ENCODE measurements at regions of chr9 and their contacts with region 1.

Region 1: GRCh38 chr9:26975693-26976059 is 19.5 kb downstream of the IFT74 start:
- DNase-seq: peak; percentile 68
- H3K4me3 Mint-ChIP-seq: no peak overlapping the region
- H3K27ac Mint-ChIP-seq: no peak overlapping the region
- H3K4me1 Mint-ChIP-seq: no peaks in the 10 kb centered on the region
- H3K27me3 Mint-ChIP-seq: no peaks in the 10 kb centered on the region

Region 2: DNA sequence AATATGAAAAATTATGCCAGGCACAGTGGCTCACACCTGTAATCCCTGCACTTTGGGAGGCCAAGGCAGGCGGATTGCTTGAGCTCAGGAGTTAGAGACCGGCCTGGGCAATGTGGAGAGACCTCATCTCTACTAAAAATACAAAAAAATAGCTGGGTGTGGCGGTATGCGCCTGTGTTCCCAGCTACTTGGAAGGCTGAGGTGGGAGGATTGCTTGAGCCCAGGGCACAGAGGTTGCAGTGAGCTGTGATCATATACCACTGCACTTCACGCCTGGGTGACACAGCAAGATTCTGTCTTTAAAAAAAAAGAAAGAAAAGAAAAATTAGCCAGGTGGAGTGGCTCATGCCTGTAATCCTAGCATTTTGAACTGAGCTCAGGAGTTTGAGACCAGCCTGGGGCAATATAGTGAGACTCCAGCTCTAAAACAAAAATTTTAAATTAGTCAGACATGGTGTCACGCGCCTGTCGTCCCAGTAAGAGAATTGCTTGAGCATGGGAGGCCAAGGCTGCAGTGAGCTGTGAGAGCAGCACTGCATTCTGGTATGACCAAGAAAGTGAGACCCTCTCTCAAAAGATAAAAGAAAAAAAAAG is 46.7 kb before region 1 on chr9:
- intact Hi-C with region 1: loop called (anchors 5 kb)
- DNase-seq: no peak
- H3K4me3 Mint-ChIP-seq: no peak overlapping the region
- H3K27ac Mint-ChIP-seq: no peak overlapping the region
- H3K4me1 Mint-ChIP-seq: no peaks in the 10 kb centered on the region
- H3K27me3 Mint-ChIP-seq: no peaks in the 10 kb centered on the region

Region 3: GRCh38 chr9:27043176-27043575 is 67.5 kb after region 1 on chr9:
- intact Hi-C with region 1: no loop called
- DNase-seq: no peak
- H3K4me3 Mint-ChIP-seq: no peak overlapping the region
- H3K27ac Mint-ChIP-seq: no peak overlapping the region
- H3K4me1 Mint-ChIP-seq: no peaks in the 10 kb centered on the region
- H3K27me3 Mint-ChIP-seq: no peaks in the 10 kb centered on the region